Mammary epithelial cell (primary cell): ENCODE measurements at regions of chr10 and their contacts with region 1.

Region 1: GRCh38 chr10:61903221-61903927 is 1.9 kb downstream of the ARID5B start:
- DNase-seq: peak; percentile 63
- H3K4me3 ChIP-seq: peak overlapping the region; percentile 66 to 91 (median 85)
- H3K27ac ChIP-seq: peak overlapping the region; percentile 92
- H3K4me1 ChIP-seq: peaks cover 27% of the 10 kb centered on the region
- H3K27me3 ChIP-seq: no peaks in the 10 kb centered on the region
- CTCF ChIP-seq: peak in 1 of 2 donors; percentile 44

Region 2: DNA sequence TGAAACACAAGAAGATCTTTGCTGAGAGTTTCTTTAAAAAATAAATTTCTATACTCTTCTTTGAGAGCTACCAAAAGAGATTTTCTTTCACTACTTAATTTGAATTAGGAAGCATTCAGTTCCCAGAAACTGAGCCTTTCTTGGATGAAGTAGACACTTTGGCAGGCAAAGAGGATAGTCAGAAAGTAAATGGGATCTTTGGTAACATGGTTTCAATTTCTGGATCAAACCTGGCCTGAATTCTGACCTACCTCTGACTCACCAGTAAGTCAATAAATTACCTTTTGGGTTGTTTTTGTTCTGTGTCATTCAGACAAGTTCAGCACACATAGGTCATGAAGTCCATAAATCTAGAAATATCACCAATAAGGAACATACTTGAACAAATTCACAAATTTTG is 267.4 kb before region 1 on chr10:
- CTCF ChIA-PET with region 1: no interaction called
- dilution Hi-C with region 1: no loop called
- in situ Hi-C with region 1: no loop called
- intact Hi-C with region 1: loop called (anchors 10 kb)
- DNase-seq: peak; percentile 76
- H3K4me3 ChIP-seq: no peak overlapping the region
- H3K27ac ChIP-seq: no peak overlapping the region
- H3K4me1 ChIP-seq: peaks cover 11% of the 10 kb centered on the region
- H3K27me3 ChIP-seq: no peaks in the 10 kb centered on the region
- CTCF ChIP-seq: no peak

Region 3: DNA sequence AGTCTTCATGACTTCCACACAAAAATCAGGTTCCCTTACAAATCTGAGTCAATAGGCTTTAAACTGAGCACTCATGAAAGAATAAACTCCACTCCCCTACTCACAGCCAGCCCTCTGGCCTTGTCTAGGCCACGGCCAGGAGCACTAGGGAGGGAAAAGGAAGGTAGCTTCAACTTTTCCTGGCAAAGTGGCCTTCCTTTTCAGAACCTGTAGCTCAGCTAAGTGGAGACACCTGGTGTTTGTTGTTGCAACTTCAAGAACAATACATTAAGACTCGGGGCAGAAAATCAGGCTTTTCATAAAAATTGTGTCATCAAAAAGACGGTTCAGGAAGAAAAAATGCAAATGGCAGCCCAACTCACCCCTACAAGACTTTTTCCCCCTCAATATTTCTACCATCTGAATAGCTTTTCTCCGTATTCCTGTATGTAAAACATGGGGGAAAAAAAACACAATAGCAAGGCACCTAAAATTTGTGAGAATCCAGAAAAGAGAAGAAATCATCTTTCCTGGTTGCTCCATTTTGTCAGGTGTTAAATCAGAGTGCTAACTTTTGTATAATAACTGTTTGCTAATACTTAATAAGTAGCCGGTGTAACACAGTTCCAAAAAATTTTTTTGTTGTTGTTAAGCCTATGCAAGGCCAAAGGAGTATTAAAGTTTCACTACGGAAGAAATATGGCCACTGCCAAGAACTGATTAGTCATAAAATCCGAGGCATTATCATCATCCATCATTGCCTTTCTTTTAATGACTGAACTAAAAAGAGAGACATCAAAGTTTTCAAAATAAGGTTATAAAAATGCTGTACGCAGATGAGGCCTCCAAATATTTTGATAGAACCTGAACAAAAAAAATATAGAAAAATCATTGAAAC is 68.1 kb before region 1 on chr10:
- CTCF ChIA-PET with region 1: interaction called, 3 read pairs
- dilution Hi-C with region 1: no loop called
- in situ Hi-C with region 1: no loop called
- intact Hi-C with region 1: loop called (anchors 5 kb)
- DNase-seq: peak; percentile 54
- H3K4me3 ChIP-seq: no peak overlapping the region
- H3K27ac ChIP-seq: peak overlapping the region; percentile 63
- H3K4me1 ChIP-seq: peaks cover 21% of the 10 kb centered on the region
- H3K27me3 ChIP-seq: no peaks in the 10 kb centered on the region
- CTCF ChIP-seq: peak; percentile 38 to 67

Region 4: GRCh38 chr10:62025901-62026879 is 122.8 kb after region 1 on chr10:
- CTCF ChIA-PET with region 1: interaction called, 5 read pairs
- dilution Hi-C with region 1: no loop called
- in situ Hi-C with region 1: loop called in 1 of 2 experiments (anchors 5 kb)
- intact Hi-C with region 1: loop called (anchors 2 kb)
- DNase-seq: peak; percentile 82
- H3K4me3 ChIP-seq: no peak overlapping the region
- H3K27ac ChIP-seq: peak overlapping the region; percentile 92
- H3K4me1 ChIP-seq: peaks cover 49% of the 10 kb centered on the region
- H3K27me3 ChIP-seq: no peaks in the 10 kb centered on the region
- CTCF ChIP-seq: no peak

Region 5: DNA sequence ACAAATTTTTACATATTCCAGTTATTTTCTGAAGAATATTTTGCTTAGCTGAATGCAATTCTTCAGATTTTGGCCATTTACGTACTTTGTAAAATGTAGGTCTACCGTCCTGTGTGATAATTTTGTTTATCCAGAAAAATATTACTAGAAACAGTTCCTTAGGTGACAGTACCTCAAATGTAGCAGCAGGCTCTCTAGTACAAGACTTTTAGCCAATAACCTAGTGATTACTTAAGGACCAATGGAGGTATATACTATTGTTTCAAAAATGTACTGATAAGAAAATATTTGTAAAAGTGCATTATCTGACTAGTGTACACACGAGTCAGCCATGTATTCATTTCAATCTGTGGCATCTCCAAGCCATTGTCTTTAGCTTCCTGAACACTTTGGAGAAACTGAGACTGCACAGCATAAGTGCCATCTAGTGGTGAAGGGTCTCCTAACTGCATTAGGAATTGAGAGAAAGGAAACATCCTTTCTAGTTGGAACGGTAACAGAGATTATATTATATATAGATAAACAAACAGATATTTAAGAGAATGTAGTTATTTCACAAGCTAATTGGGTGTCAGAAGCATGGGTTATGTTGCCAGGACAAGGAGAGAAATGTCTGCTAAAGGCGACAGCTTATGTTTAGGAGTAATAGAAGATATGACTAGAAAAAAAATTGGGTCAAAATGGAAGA is 341.6 kb after region 1 on chr10:
- CTCF ChIA-PET with region 1: no interaction called
- dilution Hi-C with region 1: no loop called
- in situ Hi-C with region 1: loop called (anchors 5 to 10 kb)
- intact Hi-C with region 1: loop called (anchors 1 kb)
- DNase-seq: peak; percentile 70
- H3K4me3 ChIP-seq: peak overlapping the region in 2 of 3 experiments; percentile 14 to 69
- H3K27ac ChIP-seq: peak overlapping the region; percentile 84
- H3K4me1 ChIP-seq: peaks cover 18% of the 10 kb centered on the region
- H3K27me3 ChIP-seq: no peaks in the 10 kb centered on the region
- CTCF ChIP-seq: peak; percentile 85 to 96

Region 6: GRCh38 chr10:62422068-62422590 is 518.8 kb after region 1 on chr10:
- CTCF ChIA-PET with region 1: no interaction called
- dilution Hi-C with region 1: no loop called
- in situ Hi-C with region 1: no loop called
- intact Hi-C with region 1: loop called (anchors 10 kb)
- DNase-seq: peak; percentile 88
- H3K4me3 ChIP-seq: no peak overlapping the region
- H3K27ac ChIP-seq: peak overlapping the region; percentile 59
- H3K4me1 ChIP-seq: peaks cover 30% of the 10 kb centered on the region
- H3K27me3 ChIP-seq: no peaks in the 10 kb centered on the region
- CTCF ChIP-seq: peak; percentile 11